Cardiac septum (tissue), 1 donor: ENCODE measurements at regions of chr9 and their contacts with region 1.

Region 1: GRCh38 chr9:33816327-33817252 is at the start of gene UBE2R2:
- DNase-seq: peak; percentile 96
- total RNA-seq, gene UBE2R2: 38.8 TPM

Region 2: DNA sequence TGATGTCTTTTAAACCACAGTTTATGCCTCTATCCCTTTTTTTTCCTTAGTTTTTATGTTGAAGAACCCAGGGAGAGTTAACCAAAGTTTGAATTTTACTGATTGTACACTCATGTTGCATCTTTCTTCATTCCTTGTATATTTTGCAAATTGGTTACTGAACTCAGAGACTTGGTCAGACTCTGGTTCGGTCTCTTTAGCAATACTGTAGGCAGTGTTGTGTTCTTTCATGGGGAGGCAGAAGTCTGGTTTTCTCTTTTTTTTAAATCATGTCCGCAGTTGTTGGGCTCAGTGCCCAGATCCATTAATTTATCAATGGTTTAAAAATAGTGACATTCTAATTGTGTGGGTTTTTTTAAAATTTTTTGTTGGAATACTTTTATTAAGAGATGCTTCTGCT is 23.8 kb after region 1 on chr9:
- intact Hi-C with region 1: no loop called
- DNase-seq: no peak

Region 3: GRCh38 chr9:33852216-33852826 is 35.7 kb after region 1 on chr9:
- intact Hi-C with region 1: loop called (anchors 1 kb)
- DNase-seq: peak; percentile 77

Region 4: DNA sequence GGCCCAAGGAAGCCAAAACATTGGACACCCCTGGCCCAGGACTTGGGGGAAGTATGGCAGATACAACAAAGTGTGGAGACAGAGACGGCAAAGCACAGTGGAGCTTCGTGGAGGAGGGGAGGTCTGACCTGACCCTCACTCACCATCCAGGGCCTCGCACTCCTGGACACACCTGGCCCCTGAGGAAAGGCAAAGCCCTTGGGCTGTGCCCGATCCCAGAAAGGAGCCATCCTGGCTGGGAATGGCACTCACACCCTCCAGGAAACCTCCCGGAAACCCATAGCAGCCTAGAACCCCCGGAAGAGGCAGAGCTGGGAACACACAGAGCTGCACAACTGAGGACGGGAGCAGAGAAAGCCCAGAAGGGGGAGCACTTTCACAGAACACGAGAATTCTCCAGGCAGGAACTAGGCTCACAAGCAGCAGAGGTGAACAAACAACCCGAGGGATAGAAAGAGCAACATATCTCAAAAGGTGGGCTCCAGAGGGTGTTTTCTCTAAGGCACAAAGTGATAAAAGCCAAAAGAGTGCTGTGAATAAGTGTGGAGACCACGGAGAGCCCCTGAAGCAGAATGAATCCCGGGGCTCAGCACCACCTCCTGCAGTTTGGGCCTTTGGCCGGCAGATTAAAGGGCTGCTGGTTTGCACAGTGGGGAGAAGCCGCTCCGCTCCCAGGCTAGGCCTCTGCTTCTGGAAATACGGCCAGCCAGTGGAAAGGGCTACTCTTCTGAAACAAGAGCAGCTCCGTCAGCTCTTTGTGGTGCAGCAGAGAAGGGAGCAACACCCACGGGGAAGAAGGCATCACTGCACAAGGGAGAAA is 108.6 kb after region 1 on chr9:
- intact Hi-C with region 1: loop called (anchors 5 kb)
- DNase-seq: no peak

Region 5: GRCh38 chr9:34084562-34084961 is 268.0 kb after region 1 on chr9:
- intact Hi-C with region 1: no loop called
- DNase-seq: no peak

Region 6: DNA sequence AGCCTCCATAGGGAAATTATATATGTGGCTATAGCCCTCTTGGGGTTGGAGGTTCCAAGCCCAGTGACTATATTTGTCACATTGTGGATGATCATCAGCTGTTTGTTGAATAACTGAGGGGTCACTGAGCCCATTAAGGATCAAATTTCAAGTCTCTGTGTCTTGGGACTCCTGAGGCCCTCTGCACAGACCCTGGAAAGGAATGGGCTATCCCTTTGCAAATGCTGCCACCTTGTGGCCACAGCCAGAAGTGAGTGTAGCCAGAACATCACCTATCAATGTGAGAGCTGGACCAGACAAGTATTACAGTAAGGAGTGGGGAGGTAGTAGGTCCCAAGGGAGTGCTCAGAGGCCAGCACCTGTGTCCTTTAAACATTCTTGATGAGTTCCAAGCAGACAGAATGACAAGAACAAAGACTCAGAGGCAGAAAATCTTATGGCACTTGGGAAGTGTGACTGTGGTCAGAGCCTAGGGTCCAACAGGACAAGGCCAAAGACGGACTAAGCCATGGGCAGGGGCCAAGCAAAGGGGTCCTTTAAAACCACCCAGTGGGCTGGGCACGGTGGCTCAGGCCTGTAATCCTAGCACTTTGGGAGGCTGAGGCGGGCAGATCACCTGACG is 787.1 kb after region 1 on chr9:
- intact Hi-C with region 1: no loop called
- DNase-seq: peak; percentile 89